IMR-90 (cell line): ENCODE measurements at regions of chr4 and their contacts with region 1.

Region 1: GRCh38 chr4:120977435-120977997 is 55.0 kb upstream of the PRDM5 start:
- DNase-seq: peak; percentile 70
- ATAC-seq: peak; percentile 92
- H3K4me3 ChIP-seq: no peak overlapping the region
- H3K27ac ChIP-seq: no peak overlapping the region
- H3K4me1 ChIP-seq: no peaks in the 10 kb centered on the region
- H3K27me3 ChIP-seq: no peaks in the 10 kb centered on the region; the same call in 1 of the 2 replicates
- CTCF ChIP-seq: peak; percentile 68
- POLR2A ChIP-seq: no peak
- RAD21 ChIP-seq: peak; percentile 72

Region 2: DNA sequence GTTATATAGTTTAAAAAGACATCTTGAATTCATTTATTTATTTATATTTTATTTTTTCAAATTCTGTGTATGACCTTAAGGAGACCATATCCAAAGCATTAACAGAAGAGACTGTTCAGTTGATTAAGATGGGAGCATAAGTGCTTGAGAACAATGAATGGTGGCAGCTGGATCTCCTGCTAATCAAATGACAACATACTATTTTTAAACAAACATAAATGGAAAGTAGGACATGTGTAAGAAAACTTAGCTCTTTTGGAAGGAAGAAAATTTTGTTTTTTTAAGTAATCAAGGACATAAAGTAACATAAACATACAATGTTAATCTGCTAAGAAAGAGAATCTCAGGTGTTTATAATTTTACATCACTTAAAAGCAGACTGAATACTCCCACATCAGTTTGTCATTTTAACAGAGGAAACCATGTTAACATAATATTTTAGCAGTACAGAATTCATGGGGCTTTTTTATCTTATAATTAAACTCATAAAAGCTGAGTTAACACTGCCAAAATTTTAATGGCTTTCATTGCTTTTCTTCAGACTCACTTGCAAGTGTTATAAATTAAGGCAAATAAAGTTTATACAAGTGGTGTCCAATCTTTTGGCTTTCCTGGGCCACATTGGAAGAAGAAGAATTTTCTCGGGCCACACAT is 1006.0 kb before region 1 on chr4:
- CTCF ChIA-PET with region 1: no interaction called
- POLR2A ChIA-PET with region 1: no interaction called
- dilution Hi-C with region 1: no loop called
- in situ Hi-C with region 1: no loop called
- intact Hi-C with region 1: no loop called
- DNase-seq: no peak
- ATAC-seq: no peak
- H3K4me3 ChIP-seq: no peak overlapping the region
- H3K27ac ChIP-seq: no peak overlapping the region
- H3K4me1 ChIP-seq: no peaks in the 10 kb centered on the region
- H3K27me3 ChIP-seq: no peaks in the 10 kb centered on the region
- CTCF ChIP-seq: no peak
- POLR2A ChIP-seq: no peak
- RAD21 ChIP-seq: no peak

Region 3: GRCh38 chr4:120071192-120071795 is 906.2 kb before region 1 on chr4:
- CTCF ChIA-PET with region 1: no interaction called
- POLR2A ChIA-PET with region 1: no interaction called
- dilution Hi-C with region 1: no loop called
- in situ Hi-C with region 1: no loop called
- intact Hi-C with region 1: loop called (anchors 5 kb)
- DNase-seq: peak; percentile 80
- ATAC-seq: no peak; the same call in 1 of the 2 replicates
- H3K4me3 ChIP-seq: no peak overlapping the region
- H3K27ac ChIP-seq: no peak overlapping the region
- H3K4me1 ChIP-seq: peaks cover 7% of the 10 kb centered on the region
- H3K27me3 ChIP-seq: no peaks in the 10 kb centered on the region
- CTCF ChIP-seq: peak; percentile 75
- POLR2A ChIP-seq: no peak
- RAD21 ChIP-seq: peak; percentile 75

Region 4: GRCh38 chr4:120965938-120966337 is 11.6 kb before region 1 on chr4:
- CTCF ChIA-PET with region 1: interaction called, 11 read pairs
- POLR2A ChIA-PET with region 1: no interaction called
- dilution Hi-C with region 1: no loop called
- in situ Hi-C with region 1: no loop called
- intact Hi-C with region 1: no loop called
- DNase-seq: no peak
- ATAC-seq: no peak
- H3K4me3 ChIP-seq: no peak overlapping the region
- H3K27ac ChIP-seq: no peak overlapping the region
- H3K4me1 ChIP-seq: no peaks in the 10 kb centered on the region
- H3K27me3 ChIP-seq: no peaks in the 10 kb centered on the region
- CTCF ChIP-seq: no peak
- POLR2A ChIP-seq: no peak
- RAD21 ChIP-seq: no peak